ENCODE measurements at regions of chr1 and their contacts with region 1.

Region 1: GRCh38 chr1:212884592-212884991 is 26.5 kb downstream of the FLVCR1 start:
- DNase-seq: no peak
- ATAC-seq: no peak
- H3K4me3 ChIP-seq: no peak overlapping the region
- H3K4me3 Mint-ChIP-seq: no peak overlapping the region
- H3K27ac ChIP-seq: no peak overlapping the region
- H3K27ac Mint-ChIP-seq: no peak overlapping the region
- H3K4me1 ChIP-seq: no peaks in the 10 kb centered on the region
- H3K4me1 Mint-ChIP-seq: no peaks in the 10 kb centered on the region
- H3K27me3 ChIP-seq: no peaks in the 10 kb centered on the region
- H3K27me3 Mint-ChIP-seq: no peaks in the 10 kb centered on the region

Region 2: DNA sequence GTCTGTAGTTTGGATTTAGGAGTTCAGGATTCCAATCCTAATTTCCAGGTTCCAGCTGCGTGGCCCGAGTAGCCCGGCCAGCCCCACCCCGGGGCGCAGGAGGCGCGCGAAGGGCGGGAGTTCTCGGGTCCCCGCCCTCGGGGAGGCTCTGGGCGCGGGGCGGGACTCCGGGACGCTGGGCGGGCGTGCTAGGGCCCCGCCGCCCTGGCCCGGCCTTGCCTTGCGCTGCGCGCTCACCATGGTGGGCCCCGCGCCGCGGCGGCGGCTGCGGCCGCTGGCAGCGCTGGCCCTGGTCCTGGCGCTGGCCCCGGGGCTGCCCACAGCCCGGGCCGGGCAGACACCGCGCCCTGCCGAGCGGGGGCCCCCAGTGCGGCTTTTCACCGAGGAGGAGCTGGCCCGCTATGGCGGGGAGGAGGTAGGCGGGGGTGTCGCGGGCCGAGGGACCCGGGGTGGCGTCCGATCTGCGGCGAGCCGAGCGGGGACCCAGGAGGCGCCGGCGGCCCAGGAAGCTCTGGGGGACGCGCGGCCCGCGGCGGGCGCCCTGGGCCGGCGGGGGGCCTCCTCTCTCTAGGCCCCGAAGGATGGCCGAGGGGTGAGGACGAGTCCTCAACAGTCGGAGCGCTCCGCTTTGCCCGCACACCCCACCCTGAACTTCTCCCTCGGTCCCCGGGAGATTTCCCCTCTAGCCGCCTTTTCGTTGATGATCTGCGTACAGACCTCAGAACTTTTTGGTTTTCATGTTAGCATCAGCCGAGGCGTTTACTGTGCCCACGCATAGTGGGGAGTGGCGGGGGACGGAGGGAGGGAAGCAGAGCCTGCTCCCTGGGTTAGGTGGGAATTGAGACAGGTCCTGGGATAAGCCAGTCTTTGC is 451.7 kb before region 1 on chr1 and contains the start of gene NENF:
- CTCF ChIA-PET with region 1: no interaction called
- POLR2A ChIA-PET with region 1: interaction called in 1 of 2 experiments, 11 read pairs
- DNase-seq: peak; percentile 28 to 81 (median 65)
- ATAC-seq: peak; percentile 99 to 100 (median 100)
- H3K4me3 ChIP-seq: peak within 1 kb of the TSS; percentile 52 to 59
- H3K4me3 Mint-ChIP-seq: peak within 1 kb of the TSS; percentile 68 to 79 (median 75)
- H3K27ac ChIP-seq: no peak within 1 kb of the TSS
- H3K27ac Mint-ChIP-seq: peak within 1 kb of the TSS in 1 of 2 donors; percentile 77
- H3K4me1 ChIP-seq: peaks cover 2 to 19% of the 10 kb centered on the region in 2 experiments
- H3K4me1 Mint-ChIP-seq: peaks cover 28 to 40% (median 36%) of the 10 kb centered on the region in 3 donors
- H3K27me3 ChIP-seq: no peaks in the 10 kb centered on the region
- H3K27me3 Mint-ChIP-seq: no peaks in the 10 kb centered on the region
- total RNA-seq, gene NENF: 17.4 to 29.3 (median 25.9) TPM

Region 3: DNA sequence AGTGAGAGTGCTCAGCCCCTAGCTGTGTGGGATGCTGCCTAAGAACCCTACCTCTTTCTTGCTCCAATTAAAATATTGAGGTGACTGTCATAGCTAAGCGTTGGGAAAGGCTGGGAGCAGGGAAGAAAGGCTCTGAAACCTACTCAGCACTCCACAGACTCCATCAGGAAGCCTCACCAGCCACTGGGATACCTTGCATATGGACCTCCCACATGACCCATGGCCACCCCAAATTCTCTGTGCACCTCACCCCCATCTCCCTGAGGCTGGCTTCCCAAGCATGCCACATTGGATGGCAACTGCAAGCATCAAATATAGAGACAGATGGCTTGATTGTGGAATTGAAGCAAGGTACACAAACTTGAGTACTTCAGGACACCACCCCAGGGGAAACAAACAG is 15.3 kb after region 1 on chr1:
- CTCF ChIA-PET with region 1: no interaction called
- POLR2A ChIA-PET with region 1: no interaction called
- DNase-seq: no peak
- ATAC-seq: no peak
- H3K4me3 ChIP-seq: no peak overlapping the region
- H3K4me3 Mint-ChIP-seq: no peak overlapping the region
- H3K27ac ChIP-seq: no peak overlapping the region
- H3K27ac Mint-ChIP-seq: no peak overlapping the region
- H3K4me1 ChIP-seq: no peaks in the 10 kb centered on the region
- H3K4me1 Mint-ChIP-seq: no peaks in the 10 kb centered on the region
- H3K27me3 ChIP-seq: no peaks in the 10 kb centered on the region
- H3K27me3 Mint-ChIP-seq: no peaks in the 10 kb centered on the region